Transverse colon (tissue), 4 donors: ENCODE measurements at regions of chr2 and their contacts with region 1.

Region 1: DNA sequence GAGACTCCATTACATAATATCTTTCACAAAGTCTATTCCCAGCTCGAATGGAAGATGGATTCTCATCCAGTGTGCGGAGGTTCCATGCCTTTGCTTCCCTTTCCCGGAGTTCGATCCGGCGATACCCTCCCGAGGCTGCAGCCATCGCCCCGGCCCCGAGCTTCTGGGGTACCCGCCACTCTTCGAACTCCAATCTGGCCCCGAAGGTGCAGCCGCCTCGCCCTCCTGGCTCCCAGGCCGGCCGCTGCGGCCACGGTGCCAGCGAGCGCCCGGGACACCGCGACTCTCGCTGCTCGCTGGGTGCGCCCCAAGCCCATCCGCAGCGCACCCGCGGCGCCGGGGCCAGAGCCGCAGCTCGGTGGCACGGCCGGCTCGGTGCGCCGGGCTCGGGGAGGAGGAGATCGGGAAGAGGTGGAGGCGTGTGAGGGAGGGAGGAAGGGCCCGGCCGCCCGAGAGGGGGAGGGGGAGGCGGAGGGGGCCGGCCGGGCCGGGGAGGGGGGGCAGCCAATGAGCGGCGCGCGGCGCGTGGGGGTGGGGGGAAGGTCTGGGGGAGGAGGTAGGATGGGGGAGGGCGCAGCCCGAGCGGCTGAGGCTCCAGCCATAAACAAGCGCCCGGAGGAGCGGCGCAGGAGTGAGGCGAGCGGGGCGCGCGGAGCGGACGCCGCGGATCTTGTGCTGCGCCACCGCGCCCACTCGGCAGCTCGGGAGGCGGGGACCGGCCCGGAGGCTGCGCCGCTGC is at the start of gene CRIM1:
- DNase-seq: peak; percentile 92
- H3K4me3 ChIP-seq: peak within 1 kb of the TSS; percentile 70 to 91 (median 84)
- H3K27ac ChIP-seq: peak within 1 kb of the TSS; percentile 94 to 98 (median 96)
- H3K4me1 ChIP-seq: peaks cover 11 to 34% (median 26%) of the 10 kb centered on the region in 4 donors
- H3K27me3 ChIP-seq: no peaks in the 10 kb centered on the region
- CTCF ChIP-seq: no peak
- EP300 ChIP-seq: no peak
- POLR2A ChIP-seq: peak; percentile 60
- total RNA-seq, gene CRIM1: 73.7 to 134 (median 80.7) TPM

Region 2: DNA sequence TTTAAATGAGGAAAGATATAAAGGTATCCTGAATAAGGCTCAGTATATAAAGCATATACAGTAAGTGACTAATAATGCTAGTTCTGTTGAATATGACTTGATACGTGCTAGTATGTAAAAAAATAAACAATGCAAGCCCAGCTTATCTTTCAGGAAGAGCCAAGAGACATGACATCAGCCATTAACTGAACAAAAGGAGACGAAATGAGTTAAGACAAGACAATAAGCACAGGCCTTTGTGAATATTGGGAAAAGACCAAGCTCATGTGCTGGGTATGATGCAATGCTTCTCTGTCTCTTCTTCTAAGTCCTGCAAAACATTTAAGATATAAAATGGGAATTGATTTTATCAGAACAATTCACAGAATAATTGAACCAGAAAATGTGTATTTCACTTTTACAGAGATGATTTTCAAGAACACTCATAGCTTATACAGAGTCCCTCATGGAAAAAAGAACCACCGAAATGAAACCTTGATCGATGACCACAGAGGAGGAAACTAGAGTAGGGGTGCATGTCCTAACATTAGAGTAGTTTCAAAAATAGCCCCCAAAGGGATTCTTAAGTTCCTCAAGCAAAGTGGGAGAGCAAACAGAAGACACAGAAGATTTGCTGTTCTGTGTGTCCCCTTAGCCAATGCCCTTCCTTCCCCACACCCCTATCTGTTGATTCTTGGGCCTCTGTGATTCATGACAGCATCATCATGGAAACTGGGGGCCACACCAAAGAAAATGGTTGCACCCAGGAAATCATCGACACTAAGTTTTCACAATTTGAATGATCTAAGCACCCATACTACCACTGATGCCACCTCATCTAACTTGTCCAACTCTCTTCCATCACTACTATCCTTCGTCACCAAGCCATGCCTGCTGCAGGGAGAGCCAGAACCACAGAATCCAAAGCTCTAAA is 67.7 kb before region 1 on chr2:
- in situ Hi-C with region 1: no loop called
- intact Hi-C with region 1: no loop called
- DNase-seq: no peak
- H3K4me3 ChIP-seq: no peak overlapping the region
- H3K27ac ChIP-seq: no peak overlapping the region
- H3K4me1 ChIP-seq: no peaks in the 10 kb centered on the region
- H3K27me3 ChIP-seq: no peaks in the 10 kb centered on the region
- CTCF ChIP-seq: no peak
- EP300 ChIP-seq: no peak
- POLR2A ChIP-seq: no peak

Region 3: GRCh38 chr2:36461039-36461681 is 105.8 kb after region 1 on chr2:
- in situ Hi-C with region 1: loop called in 3 of 4 experiments (anchors 10 to 25 kb)
- intact Hi-C with region 1: loop called (anchors 10 kb)
- DNase-seq: no peak
- H3K4me3 ChIP-seq: no peak overlapping the region
- H3K27ac ChIP-seq: peak overlapping the region; percentile 43 to 59 (median 52)
- H3K4me1 ChIP-seq: peaks cover 13 to 52% (median 43%) of the 10 kb centered on the region in 4 donors
- H3K27me3 ChIP-seq: no peaks in the 10 kb centered on the region
- CTCF ChIP-seq: no peak
- EP300 ChIP-seq: no peak
- POLR2A ChIP-seq: no peak

Region 4: DNA sequence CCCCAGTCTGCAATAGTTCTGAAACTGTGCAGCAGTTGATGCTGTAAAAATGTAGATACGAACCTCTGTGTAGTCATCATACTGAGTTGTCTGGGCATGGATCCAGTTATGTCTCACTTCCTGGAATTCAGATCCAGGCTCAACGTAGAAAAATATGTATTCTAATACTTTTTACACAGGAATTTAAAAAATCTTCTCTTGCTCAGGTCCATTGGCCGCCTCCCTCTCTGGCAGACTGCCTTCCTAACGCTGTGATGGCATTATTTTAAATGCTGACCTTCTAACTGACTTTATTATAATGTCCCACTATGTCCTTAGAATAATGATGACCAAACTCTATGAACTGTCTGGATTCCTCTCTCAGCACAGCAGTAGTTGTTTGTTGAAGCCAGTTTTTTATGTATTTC is 123.0 kb after region 1 on chr2:
- in situ Hi-C with region 1: loop called in 3 of 4 experiments (anchors 25 kb)
- intact Hi-C with region 1: no loop called
- DNase-seq: no peak
- H3K4me3 ChIP-seq: no peak overlapping the region
- H3K27ac ChIP-seq: peak overlapping the region in 3 of 4 donors; percentile 55 to 77 (median 70)
- H3K4me1 ChIP-seq: peaks cover 4 to 20% (median 17%) of the 10 kb centered on the region in 4 donors
- H3K27me3 ChIP-seq: no peaks in the 10 kb centered on the region
- CTCF ChIP-seq: no peak
- EP300 ChIP-seq: no peak
- POLR2A ChIP-seq: no peak

Region 5: GRCh38 chr2:36502081-36502480 is 146.8 kb after region 1 on chr2:
- in situ Hi-C with region 1: loop called in 2 of 4 experiments (anchors 5 to 25 kb)
- intact Hi-C with region 1: loop called (anchors 5 kb)
- DNase-seq: no peak
- H3K4me3 ChIP-seq: no peak overlapping the region
- H3K27ac ChIP-seq: no peak overlapping the region
- H3K4me1 ChIP-seq: no peaks in the 10 kb centered on the region
- H3K27me3 ChIP-seq: no peaks in the 10 kb centered on the region
- CTCF ChIP-seq: no peak
- EP300 ChIP-seq: no peak
- POLR2A ChIP-seq: no peak

Region 6: GRCh38 chr2:36663851-36664695 is 308.8 kb after region 1 on chr2:
- in situ Hi-C with region 1: loop called in 3 of 4 experiments (anchors 5 to 10 kb)
- intact Hi-C with region 1: loop called (anchors 5 kb)
- DNase-seq: no peak
- H3K4me3 ChIP-seq: no peak overlapping the region
- H3K27ac ChIP-seq: no peak overlapping the region
- H3K4me1 ChIP-seq: no peaks in the 10 kb centered on the region
- H3K27me3 ChIP-seq: peaks cover 4% of the 10 kb centered on the region
- CTCF ChIP-seq: peak; percentile 63 to 79 (median 73)
- EP300 ChIP-seq: no peak
- POLR2A ChIP-seq: no peak

Region 7: DNA sequence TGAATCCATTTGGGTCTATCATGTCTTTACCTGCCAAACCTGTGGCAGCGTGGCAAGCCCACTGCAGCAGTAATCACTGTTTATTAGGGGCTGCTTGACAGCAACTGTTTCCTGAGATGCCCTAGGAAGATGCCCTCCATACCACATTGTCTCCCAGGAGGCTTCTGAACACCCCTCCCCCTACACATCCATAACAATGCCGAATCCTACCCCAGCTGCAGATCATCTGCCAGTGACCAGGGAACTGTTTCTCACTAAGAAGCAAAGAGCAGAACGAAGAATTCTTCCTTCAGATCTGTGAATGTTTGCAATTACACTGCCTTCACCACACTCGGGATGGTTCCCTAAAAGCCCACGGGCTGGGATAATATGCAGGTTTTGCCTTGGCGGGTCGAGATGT is 469.0 kb after region 1 on chr2:
- in situ Hi-C with region 1: no loop called
- intact Hi-C with region 1: no loop called
- DNase-seq: no peak
- H3K4me3 ChIP-seq: no peak overlapping the region
- H3K27ac ChIP-seq: no peak overlapping the region
- H3K4me1 ChIP-seq: peaks cover 6 to 39% (median 25%) of the 10 kb centered on the region in 4 donors
- H3K27me3 ChIP-seq: no peaks in the 10 kb centered on the region
- CTCF ChIP-seq: no peak
- EP300 ChIP-seq: no peak
- POLR2A ChIP-seq: no peak